ENCODE measurements at regions of chr6 and their contacts with region 1.

Region 1: GRCh38 chr6:45472382-45472781 is 94.6 kb upstream of the SUPT3H start:
- DNase-seq: peak; percentile 70
- H3K4me3 ChIP-seq: no peak overlapping the region
- H3K27ac ChIP-seq: peak overlapping the region in 3 of 4 donors; percentile 31 to 70 (median 64)
- H3K4me1 ChIP-seq: peaks cover 0 to 14% (median 4%) of the 10 kb centered on the region in 4 donors
- H3K27me3 ChIP-seq: no peaks in the 10 kb centered on the region
- CTCF ChIP-seq: no peak
- EP300 ChIP-seq: no peak
- POLR2A ChIP-seq: no peak

Region 2: DNA sequence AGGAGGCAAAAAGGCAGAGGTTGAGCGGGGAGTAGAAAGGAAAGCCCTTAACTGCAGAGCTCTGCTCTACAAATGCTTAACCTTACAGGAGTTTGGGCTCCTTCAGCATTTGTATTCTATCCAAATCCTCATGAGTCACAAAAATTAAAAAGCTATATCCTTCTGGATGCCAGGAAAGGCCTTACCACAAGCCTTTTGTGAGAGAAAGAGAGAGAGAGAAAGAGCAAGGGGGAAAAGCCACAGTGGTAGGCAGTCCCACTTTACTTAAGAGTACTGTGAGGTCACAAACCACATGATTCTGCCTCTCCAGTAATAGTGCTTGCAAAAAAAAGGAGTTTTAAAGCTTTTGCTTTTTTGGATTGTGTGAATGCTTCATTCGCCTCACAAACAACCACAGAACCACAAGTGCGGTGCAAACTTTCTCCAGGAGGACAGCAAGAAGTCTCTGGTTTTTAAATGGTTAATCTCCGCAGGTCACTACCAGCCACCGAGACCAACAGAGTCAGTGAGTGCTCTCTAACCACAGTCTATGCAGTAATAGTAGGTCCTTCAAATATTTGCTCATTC is 144.3 kb before region 1 on chr6 and contains the start of gene RUNX2:
- intact Hi-C with region 1: no loop called
- DNase-seq: no peak
- H3K4me3 ChIP-seq: peak within 1 kb of the TSS in 2 of 4 donors; percentile 8 to 12
- H3K27ac ChIP-seq: peak within 1 kb of the TSS in 1 of 4 donors; percentile 22
- H3K4me1 ChIP-seq: peaks cover 0 to 12% (median 5%) of the 10 kb centered on the region in 4 donors
- H3K27me3 ChIP-seq: no peaks in the 10 kb centered on the region
- CTCF ChIP-seq: no peak
- EP300 ChIP-seq: no peak
- POLR2A ChIP-seq: no peak
- total RNA-seq, gene RUNX2: 2.9 to 4.7 (median 4.4) TPM

Region 3: DNA sequence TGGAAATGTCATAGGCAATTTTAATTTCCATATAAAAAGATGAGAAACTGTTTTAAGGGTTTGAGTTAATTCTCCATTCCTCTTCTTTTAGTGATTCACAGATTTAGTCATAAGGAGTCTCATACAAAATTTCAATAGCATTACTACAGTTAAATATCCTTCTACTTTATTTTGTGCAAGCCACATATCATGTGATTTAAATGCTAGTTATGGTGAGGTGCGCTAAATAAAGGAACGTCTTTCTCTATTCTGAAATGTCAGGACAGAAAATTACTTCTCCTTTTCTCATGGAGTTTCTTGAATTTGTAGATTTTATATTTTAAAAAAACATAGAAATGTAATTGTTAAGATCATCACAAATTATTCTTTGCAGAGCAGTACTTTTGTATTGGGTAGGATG is 44.7 kb before region 1 on chr6:
- intact Hi-C with region 1: loop called (anchors 5 kb)
- DNase-seq: no peak
- H3K4me3 ChIP-seq: no peak overlapping the region
- H3K27ac ChIP-seq: no peak overlapping the region
- H3K4me1 ChIP-seq: peaks cover 0 to 19% (median 14%) of the 10 kb centered on the region in 4 donors
- H3K27me3 ChIP-seq: peaks cover 0 to 8% (median 0%) of the 10 kb centered on the region in 3 donors
- CTCF ChIP-seq: no peak
- EP300 ChIP-seq: no peak
- POLR2A ChIP-seq: no peak

Region 4: GRCh38 chr6:46011241-46012085 is 539.1 kb after region 1 on chr6:
- intact Hi-C with region 1: no loop called
- DNase-seq: no peak
- H3K4me3 ChIP-seq: no peak overlapping the region
- H3K27ac ChIP-seq: no peak overlapping the region
- H3K4me1 ChIP-seq: peaks cover 0 to 19% (median 15%) of the 10 kb centered on the region in 4 donors
- H3K27me3 ChIP-seq: peaks cover 6 to 31% (median 22%) of the 10 kb centered on the region in 3 donors
- CTCF ChIP-seq: no peak
- EP300 ChIP-seq: no peak
- POLR2A ChIP-seq: no peak

Measured in sigmoid colon (tissue), 7 donors.